HEK293 (cell line): ENCODE measurements at regions of chr22 and their contacts with region 1.

Region 1: DNA sequence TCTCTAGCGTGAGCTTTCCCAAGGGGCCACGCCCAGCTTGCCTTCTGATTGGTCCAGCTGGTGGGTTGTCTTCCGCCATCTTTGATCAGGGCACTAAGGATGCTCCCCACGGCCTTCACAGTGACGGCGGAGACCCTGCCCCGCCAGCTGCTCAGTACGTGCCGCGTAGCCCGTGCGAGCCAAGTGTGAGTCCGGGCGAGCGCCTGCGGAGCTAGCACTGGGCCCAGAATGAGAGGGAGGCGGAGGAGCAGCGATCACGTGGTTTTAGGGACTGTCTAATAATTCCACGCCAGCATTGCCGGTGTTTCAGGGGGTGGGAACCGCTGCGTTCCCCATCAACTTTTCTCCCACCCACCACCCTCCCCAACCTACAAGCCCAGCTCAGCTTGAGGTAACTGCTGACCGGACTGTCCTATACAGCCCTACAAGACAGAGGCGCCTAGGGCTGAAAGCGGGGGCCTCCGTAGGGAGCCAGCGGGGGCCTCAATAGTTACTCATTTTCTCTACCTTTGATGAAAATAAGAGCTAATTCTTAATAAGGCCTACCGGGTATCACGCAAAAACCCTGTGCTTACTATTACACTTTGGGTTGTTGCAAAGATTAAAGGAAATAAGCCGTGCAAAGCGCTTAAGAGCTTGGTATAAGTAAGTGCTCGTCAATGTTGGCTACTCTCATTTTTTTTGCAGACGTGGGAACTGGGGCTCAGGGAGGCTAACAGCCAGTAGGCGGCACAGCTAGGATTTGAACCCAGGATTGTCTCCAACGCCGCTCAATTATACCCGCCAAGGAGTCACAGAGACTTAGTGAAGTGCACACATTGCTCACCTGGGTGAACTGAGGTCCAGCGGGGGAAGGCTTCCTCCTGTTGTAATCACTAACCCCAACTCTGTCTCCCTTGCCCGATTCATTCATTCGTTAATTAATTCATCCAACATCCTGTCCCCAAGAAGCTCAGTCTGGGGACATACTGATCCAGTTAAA is 1.3 kb upstream of the MTFP1 start:
- H3K4me3 ChIP-seq: peak overlapping the region; percentile 39
- H3K27ac ChIP-seq: peak overlapping the region; percentile 98
- H3K4me1 ChIP-seq: peaks cover 28% of the 10 kb centered on the region
- CTCF ChIP-seq: no peak; the same call in 1 of the 2 replicates

Region 2: GRCh38 chr22:30356449-30357235 is 67.6 kb before region 1 on chr22 and contains the starts of genes CCDC157 and SF3A1:
- CTCF ChIA-PET with region 1: no interaction called
- POLR2A ChIA-PET with region 1: interaction called, 14 read pairs
- H3K4me3 ChIP-seq: peak within 1 kb of the TSS; percentile 98
- H3K27ac ChIP-seq: peak within 1 kb of the TSS; percentile 82
- H3K4me1 ChIP-seq: peaks cover 5% of the 10 kb centered on the region; the same call in 1 of the 2 replicates
- CTCF ChIP-seq: peak; percentile 52; the same call in 1 of the 2 replicates

Region 3: DNA sequence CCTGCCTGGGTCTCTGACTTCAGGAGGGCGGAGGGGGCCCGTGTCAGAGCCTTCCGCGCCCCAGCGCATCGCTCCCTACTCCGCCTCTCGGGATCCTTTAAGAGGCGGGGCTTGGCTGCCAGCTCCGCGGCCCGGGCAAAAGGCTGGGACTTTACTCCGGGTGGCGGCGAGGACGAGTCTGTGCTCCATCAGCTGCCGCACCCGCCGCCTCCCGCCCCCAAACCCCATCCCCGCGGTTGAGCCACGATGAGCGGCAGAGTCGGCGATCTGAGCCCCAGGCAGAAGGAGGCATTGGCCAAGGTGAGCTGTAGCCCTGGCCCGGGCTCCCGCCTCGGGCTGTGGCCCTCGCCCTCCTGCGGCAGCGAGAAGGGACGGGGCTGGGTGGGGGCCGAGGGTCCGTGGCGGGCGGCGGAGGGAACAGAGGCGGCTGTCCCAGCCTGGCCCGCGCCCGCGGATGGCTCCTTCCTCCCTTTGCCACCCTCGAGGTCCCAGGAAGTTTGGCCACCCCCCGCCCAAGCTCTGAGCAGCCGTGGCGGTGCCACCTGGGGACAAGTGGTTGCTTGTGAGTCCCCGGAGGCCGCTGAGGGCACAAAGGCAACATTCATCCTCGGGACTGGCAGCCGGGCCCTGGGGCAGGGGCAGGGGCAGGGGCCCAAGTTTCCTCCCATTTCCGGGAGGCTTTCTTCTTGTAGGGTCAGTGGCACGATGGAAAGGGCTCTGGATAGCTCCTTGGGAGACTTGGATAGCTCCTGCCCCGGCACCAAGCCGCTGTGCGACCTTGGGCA is 27.2 kb before region 1 on chr22 and contains the start of gene SEC14L2:
- CTCF ChIA-PET with region 1: interaction called, 71 read pairs
- POLR2A ChIA-PET with region 1: interaction called, 86 read pairs
- H3K4me3 ChIP-seq: peak within 1 kb of the TSS; percentile 80
- H3K27ac ChIP-seq: no peak within 1 kb of the TSS; the same call in 1 of the 2 replicates
- H3K4me1 ChIP-seq: peaks cover 3% of the 10 kb centered on the region; the same call in 1 of the 2 replicates
- CTCF ChIP-seq: no peak

Region 4: GRCh38 chr22:30413745-30414524 is 10.3 kb before region 1 on chr22:
- CTCF ChIA-PET with region 1: interaction called, 14 read pairs
- POLR2A ChIA-PET with region 1: interaction called, 78 read pairs
- H3K4me3 ChIP-seq: no peak overlapping the region
- H3K27ac ChIP-seq: no peak overlapping the region
- H3K4me1 ChIP-seq: no peaks in the 10 kb centered on the region
- CTCF ChIP-seq: no peak

Region 5: DNA sequence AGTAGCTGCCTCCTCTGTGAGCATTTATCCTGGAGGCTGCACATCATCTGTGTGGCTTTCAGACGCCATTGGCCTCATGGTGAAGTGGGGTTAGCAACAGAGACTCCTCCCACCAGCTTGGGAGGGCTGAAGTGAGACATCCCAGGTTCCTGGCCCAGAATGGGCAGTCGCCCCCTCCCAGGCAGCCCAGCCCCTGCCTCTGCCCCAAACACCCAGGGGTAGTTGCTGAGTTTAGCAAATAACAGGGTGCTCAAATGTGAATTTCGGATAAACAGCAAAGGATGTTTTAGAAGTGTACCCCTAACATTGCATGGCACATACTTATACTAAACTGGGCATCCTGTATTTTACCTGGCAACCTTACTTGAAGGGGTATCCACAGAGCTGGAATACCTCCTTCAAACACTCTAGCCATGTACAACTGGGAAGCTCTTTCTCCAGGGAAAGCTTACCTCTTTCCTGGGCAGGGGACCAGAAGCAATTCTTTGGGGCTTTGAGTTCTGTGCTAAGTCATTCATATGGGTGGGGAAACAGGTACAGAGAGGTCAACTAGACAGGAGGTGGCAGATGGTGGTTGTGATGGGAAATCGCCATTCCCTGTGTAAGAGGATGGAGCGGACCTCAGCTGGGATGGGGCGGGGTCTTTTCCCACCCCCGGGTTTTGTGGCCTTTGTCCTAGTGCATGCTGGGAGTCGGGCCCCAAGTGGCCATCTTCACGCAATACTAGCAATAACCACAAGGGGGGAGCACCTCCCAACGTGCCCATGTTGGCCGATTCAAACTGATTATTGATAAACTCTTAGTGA is 20.6 kb after region 1 on chr22:
- CTCF ChIA-PET with region 1: interaction called, 13 read pairs
- POLR2A ChIA-PET with region 1: interaction called, 17 read pairs
- H3K4me3 ChIP-seq: peak overlapping the region; percentile 10
- H3K27ac ChIP-seq: no peak overlapping the region
- H3K4me1 ChIP-seq: no peaks in the 10 kb centered on the region
- CTCF ChIP-seq: 0 out of 2 replicates have a peak, but pooled peaks have one; percentile 44